ENCODE measurements at regions of chr18 and their contacts with region 1.

Region 1: DNA sequence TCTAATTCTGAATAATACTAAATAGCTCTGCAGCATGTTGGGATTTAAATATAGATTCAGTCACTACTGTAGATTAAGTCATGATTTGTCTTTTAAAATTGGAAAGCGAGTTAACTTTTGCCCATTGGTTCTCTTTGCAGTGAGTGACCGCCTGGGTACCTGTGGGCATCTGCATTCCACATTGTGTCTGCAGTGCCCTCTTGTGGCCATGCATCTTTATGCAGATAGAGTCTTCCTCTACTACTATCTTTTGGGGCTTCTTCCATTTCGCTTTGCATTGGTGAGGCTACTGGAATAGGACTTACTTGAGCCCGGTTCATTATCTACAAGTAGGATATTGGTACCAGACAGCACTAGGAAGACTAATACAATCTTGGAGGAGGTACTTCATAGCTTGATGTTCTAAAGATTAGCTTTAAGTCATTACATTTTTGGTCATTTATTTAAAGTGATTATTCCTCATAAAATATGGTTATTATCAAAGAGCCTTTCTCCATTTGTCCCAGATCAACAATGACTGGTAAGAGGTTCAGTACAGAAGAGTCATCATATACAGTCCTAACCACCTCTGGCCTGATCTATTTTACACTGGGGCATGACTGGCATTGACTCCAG is 203.0 kb downstream of the SOCS6 start:
- DNase-seq: peak; percentile 66
- H3K4me3 ChIP-seq: no peak overlapping the region
- H3K27ac ChIP-seq: no peak overlapping the region
- H3K4me1 ChIP-seq: peaks cover 46% of the 10 kb centered on the region
- H3K27me3 ChIP-seq: no peaks in the 10 kb centered on the region
- CTCF ChIP-seq: peak; percentile 92

Region 2: DNA sequence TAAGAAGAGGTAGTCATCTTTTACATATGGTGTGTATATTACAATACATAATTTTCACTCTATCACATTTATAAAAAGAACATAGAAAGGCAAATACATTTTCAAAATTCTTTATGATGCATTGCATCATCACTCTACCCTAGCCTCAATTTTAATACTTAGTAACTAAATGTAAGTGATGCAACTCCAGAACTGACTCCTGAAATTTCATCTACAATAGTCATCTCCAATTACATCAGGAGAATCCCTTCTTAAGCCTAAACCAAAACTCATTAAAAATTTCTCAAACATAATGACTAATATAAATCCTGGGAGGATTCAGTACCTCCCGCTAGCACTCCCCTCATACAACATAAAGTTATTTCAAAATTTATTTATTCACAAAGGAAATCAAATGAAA is 1792.8 kb before region 1 on chr18:
- CTCF ChIA-PET with region 1: no interaction called
- POLR2A ChIA-PET with region 1: no interaction called
- intact Hi-C with region 1: no loop called
- DNase-seq: peak; percentile 56
- H3K4me3 ChIP-seq: no peak overlapping the region
- H3K27ac ChIP-seq: peak overlapping the region; percentile 59
- H3K4me1 ChIP-seq: peaks cover 18% of the 10 kb centered on the region
- H3K27me3 ChIP-seq: no peaks in the 10 kb centered on the region
- CTCF ChIP-seq: no peak

Region 3: GRCh38 chr18:70553245-70553935 is 61.5 kb after region 1 on chr18:
- CTCF ChIA-PET with region 1: no interaction called
- POLR2A ChIA-PET with region 1: no interaction called
- intact Hi-C with region 1: loop called (anchors 5 kb)
- DNase-seq: peak; percentile 91
- H3K4me3 ChIP-seq: peak overlapping the region; percentile 34
- H3K27ac ChIP-seq: peak overlapping the region; percentile 93
- H3K4me1 ChIP-seq: peaks cover 38% of the 10 kb centered on the region
- H3K27me3 ChIP-seq: no peaks in the 10 kb centered on the region
- CTCF ChIP-seq: no peak

Region 4: DNA sequence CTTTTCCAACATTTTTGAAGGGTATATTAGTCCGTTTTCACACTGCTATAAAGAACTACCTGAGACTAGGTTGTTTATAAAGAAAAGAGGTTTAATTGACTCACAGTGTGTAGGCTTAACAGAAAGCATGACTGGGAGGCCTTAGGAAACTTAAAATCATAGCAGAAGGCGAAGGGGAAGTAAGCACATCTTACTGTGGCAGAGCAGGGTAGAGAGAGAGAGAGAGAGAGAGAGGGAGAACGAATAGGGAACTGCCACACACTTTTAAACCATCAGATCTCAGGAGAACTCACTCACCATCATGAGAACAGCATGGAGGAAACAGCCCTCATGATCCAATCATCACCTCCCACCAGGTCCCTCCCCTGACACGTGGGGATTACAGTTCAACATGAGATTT is 217.3 kb after region 1 on chr18:
- CTCF ChIA-PET with region 1: no interaction called
- POLR2A ChIA-PET with region 1: no interaction called
- intact Hi-C with region 1: loop called (anchors 1 kb)
- DNase-seq: no peak
- H3K4me3 ChIP-seq: no peak overlapping the region
- H3K27ac ChIP-seq: no peak overlapping the region
- H3K4me1 ChIP-seq: peaks cover 36% of the 10 kb centered on the region
- H3K27me3 ChIP-seq: no peaks in the 10 kb centered on the region
- CTCF ChIP-seq: no peak

Region 5: DNA sequence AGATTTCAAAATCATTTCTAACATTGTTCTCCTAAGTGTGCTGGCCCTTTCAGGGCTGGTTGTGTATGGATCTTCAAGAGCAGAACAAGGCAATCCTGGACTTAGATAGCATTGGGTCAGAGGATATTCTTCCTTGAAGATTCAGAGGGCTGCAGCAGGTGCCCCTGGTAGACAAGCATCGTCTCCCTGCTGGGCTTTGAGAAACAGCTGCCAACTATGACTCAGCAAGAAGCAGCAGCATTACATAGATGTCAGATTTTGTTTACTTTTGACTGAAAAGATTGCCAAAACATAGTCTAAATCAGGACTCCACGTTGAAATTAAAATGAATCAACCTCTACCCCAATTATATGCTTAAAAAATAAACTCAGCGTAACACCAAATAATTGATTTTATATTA is 415.8 kb after region 1 on chr18:
- CTCF ChIA-PET with region 1: no interaction called
- POLR2A ChIA-PET with region 1: no interaction called
- intact Hi-C with region 1: loop called (anchors 10 kb)
- DNase-seq: peak; percentile 74
- H3K4me3 ChIP-seq: peak overlapping the region; percentile 12
- H3K27ac ChIP-seq: peak overlapping the region; percentile 65
- H3K4me1 ChIP-seq: peaks cover 20% of the 10 kb centered on the region
- H3K27me3 ChIP-seq: no peaks in the 10 kb centered on the region
- CTCF ChIP-seq: no peak

Region 6: DNA sequence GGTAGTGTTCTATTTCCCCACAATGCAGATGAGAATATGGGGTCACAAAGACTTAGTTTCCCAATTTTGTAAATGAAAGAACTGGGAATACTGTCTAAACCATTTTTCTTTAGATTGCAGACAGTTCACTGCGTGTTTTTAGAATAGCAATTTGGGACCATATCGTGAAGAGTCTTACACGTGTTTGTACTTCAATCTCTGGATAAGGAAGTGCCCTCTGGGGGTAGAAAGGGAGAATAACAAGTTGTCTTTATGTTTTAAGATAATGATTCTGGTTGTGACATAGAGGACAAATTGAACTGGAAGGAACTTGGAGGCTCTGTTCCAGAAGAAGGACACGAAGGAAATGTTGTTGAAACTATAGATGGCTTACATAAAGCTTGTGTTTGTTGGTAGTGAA is 1594.6 kb after region 1 on chr18:
- CTCF ChIA-PET with region 1: no interaction called
- POLR2A ChIA-PET with region 1: no interaction called
- intact Hi-C with region 1: loop called (anchors 5 kb)
- DNase-seq: peak; percentile 62
- H3K4me3 ChIP-seq: no peak overlapping the region
- H3K27ac ChIP-seq: no peak overlapping the region
- H3K4me1 ChIP-seq: no peaks in the 10 kb centered on the region
- H3K27me3 ChIP-seq: no peaks in the 10 kb centered on the region
- CTCF ChIP-seq: peak; percentile 63

Measured in A673 (cell line).